Colonic mucosa (tissue), 4 donors: ENCODE measurements at regions of chr10 and their contacts with region 1.

Region 1: DNA sequence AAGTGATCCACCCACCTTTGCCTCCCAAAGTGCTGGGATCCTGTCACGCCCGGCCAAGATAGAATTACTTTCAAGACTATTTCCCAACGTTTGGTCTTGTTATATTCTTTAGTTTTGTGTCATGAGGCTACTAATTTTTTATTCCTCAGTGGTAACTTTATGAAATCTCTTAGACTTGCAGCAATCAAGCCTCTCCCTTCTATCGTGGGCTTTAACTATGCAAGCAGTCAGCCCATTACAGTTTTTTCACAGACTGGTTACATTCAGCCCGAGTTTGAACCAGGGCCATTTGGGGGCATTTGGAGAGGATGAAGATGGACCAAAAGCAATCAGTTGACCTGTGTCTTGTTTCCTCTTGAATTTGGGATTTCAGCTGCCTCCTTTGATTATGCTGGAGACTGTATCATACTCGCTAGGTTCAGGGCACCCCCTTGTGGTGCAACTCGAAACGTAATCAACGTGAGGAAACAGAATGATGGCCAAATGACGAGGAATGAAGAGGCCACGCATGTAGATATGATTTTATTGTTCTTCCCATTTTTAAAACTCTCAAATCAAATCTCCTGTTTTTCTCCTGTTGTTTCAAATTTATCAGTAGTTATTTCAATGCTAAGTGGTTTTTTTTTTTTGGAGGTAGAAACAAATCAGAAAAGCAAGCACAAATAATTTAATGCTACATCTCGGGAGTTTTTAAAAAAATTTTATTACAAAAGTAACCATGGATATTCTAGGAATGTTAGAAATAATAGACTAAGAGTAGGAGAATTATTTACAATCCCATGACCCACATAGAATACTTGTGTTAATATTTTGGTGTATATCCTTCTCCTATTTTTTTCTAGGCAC is 151.6 kb downstream of the KIAA1217 start:
- DNase-seq: peak; percentile 81
- H3K4me3 ChIP-seq: no peak overlapping the region
- H3K27ac ChIP-seq: no peak overlapping the region
- H3K4me1 ChIP-seq: no peaks in the 10 kb centered on the region
- H3K27me3 ChIP-seq: no peaks in the 10 kb centered on the region
- CTCF ChIP-seq: peak; percentile 33

Region 2: GRCh38 chr10:24197263-24197662 is 163.2 kb before region 1 on chr10:
- intact Hi-C with region 1: loop called (anchors 10 kb)
- DNase-seq: no peak
- H3K4me3 ChIP-seq: no peak overlapping the region
- H3K27ac ChIP-seq: no peak overlapping the region
- H3K4me1 ChIP-seq: no peaks in the 10 kb centered on the region
- H3K27me3 ChIP-seq: no peaks in the 10 kb centered on the region
- CTCF ChIP-seq: no peak

Region 3: DNA sequence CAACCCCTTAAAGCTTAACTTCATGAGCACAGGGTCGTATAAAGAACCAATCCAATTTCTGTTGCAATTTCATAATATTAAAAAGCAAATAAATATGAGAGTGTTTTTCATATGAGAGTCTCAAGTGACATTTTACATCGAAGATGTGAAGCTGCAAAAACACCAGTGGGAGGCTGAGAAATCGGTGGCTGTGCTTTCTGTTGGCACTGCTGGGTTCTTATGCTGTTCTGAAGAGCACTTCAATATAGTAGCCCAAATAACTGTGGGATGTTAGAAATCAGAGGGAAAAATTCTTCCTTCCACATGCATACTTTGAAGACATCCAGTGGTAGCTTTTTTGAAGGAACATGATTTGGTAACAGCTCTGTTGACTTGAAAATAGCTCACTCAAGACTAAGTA is 117.4 kb after region 1 on chr10:
- intact Hi-C with region 1: no loop called
- DNase-seq: no peak
- H3K4me3 ChIP-seq: no peak overlapping the region
- H3K27ac ChIP-seq: no peak overlapping the region
- H3K4me1 ChIP-seq: peaks cover 4% of the 10 kb centered on the region
- H3K27me3 ChIP-seq: no peaks in the 10 kb centered on the region
- CTCF ChIP-seq: no peak

Region 4: GRCh38 chr10:24503461-24504320 is 143.2 kb after region 1 on chr10:
- intact Hi-C with region 1: loop called (anchors 10 kb)
- DNase-seq: peak; percentile 74
- H3K4me3 ChIP-seq: no peak overlapping the region
- H3K27ac ChIP-seq: no peak overlapping the region
- H3K4me1 ChIP-seq: no peaks in the 10 kb centered on the region
- H3K27me3 ChIP-seq: no peaks in the 10 kb centered on the region
- CTCF ChIP-seq: peak; percentile 53